Activated CD4-positive, alpha-beta T cell treated with anti-CD3 and anti-CD28 coated beads for 36 hours (primary cell): ENCODE measurements at regions of chr3 and their contacts with region 1.

Region 1: DNA sequence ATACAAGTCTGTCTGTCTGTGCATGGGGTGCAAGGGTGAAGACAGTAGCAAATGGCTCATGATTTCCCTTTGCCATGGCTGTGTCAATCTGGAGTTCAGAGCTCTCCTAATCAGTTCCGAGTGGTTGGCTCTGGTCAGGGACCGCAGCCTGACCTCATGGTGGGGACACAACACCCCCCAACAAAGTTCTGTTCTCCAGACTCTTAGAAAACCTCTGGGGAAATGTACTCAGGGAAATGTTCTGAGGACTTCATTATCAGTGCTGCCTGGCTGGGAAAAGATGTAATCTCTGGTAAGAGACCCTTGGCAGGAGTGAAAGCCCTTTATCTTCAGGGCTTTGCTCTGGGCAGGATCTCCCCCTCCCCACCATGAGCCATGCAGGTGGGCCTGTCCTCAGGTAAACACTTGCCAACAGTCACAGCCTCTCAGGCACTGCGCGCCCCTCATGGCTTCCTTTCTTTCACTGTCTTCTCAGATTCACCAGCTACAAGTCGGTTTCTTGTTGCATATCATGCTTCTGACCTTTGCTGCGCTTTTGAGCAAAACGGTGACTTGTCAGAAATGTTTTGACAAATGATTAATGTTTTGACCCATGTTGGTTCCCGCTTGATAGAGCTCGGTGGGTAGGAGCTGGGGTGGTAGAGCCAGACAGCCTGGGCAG is 95.5 kb downstream of the ST6GAL1 start:
- DNase-seq: peak; percentile 64
- ATAC-seq: peak; percentile 36
- H3K4me3 Mint-ChIP-seq: peak overlapping the region; percentile 85
- H3K27ac Mint-ChIP-seq: peak overlapping the region; percentile 97
- H3K4me1 Mint-ChIP-seq: peaks cover 49% of the 10 kb centered on the region
- H3K27me3 Mint-ChIP-seq: no peaks in the 10 kb centered on the region

Region 2: DNA sequence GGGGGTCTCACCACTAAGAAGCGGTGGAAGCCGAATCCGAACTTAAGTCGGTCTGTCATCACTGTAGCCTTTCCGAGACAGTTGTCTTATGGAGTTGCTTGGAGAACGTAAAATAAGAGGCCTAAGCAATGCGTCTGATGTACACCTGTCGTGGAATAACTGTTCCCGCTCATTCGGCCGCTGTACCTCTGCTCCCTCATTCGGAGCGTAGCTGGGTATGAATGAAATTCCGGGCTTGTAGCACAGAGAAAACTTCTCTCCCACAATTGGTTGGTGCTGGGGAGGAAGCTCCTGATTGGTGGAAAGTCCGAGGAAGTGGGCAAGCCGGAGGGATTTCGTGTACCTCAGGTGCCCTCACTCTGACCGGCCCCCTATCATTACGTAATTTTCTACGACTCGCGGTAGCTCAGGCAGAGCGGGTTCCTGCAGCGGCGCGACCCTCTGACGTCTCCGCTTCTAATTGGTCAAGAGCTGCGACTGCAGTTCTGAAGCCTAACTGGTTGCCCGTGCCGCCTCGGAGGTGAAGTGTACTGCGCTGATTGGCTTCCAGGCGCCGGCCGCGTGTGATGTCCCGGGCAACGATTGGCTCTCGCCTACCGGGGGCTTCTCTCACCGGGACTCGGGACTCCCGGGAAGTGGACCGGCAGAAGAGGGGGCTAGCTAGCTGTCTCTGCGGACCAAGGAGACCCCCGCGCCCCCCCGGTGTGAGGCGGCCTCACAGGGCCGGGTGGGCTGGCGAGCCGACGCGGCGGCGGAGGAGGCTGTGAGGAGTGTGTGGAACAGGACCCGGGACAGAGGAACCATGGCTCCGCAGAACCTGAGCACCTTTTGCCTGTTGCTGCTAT is 455.5 kb before region 1 on chr3 and contains the start of gene DNAJB11:
- CTCF ChIA-PET with region 1: interaction called, 3 read pairs
- POLR2A ChIA-PET with region 1: no interaction called
- intact Hi-C with region 1: loop called in 1 of 2 experiments (anchors 5 kb)
- DNase-seq: peak; percentile 100
- ATAC-seq: peak; percentile 92
- H3K4me3 Mint-ChIP-seq: peak within 1 kb of the TSS; percentile 93
- H3K27ac Mint-ChIP-seq: peak within 1 kb of the TSS; percentile 95
- H3K4me1 Mint-ChIP-seq: peaks cover 50% of the 10 kb centered on the region
- H3K27me3 Mint-ChIP-seq: no peaks in the 10 kb centered on the region
- total RNA-seq, gene DNAJB11: 30.9 to 36.6 TPM

Region 3: GRCh38 chr3:186849374-186849975 is 176.3 kb before region 1 on chr3:
- CTCF ChIA-PET with region 1: interaction called, 14 read pairs
- POLR2A ChIA-PET with region 1: interaction called, 5 read pairs
- intact Hi-C with region 1: loop called in 1 of 2 experiments (anchors 5 kb)
- DNase-seq: peak; percentile 32
- ATAC-seq: peak; percentile 90
- H3K4me3 Mint-ChIP-seq: no peak overlapping the region
- H3K27ac Mint-ChIP-seq: peak overlapping the region; percentile 52
- H3K4me1 Mint-ChIP-seq: peaks cover 18% of the 10 kb centered on the region
- H3K27me3 Mint-ChIP-seq: peaks cover 7% of the 10 kb centered on the region

Region 4: GRCh38 chr3:187006864-187007630 is 18.7 kb before region 1 on chr3:
- CTCF ChIA-PET with region 1: interaction called, 4 read pairs
- POLR2A ChIA-PET with region 1: interaction called, 5 read pairs
- intact Hi-C with region 1: loop called in 1 of 2 experiments (anchors 2 kb)
- DNase-seq: no peak
- ATAC-seq: peak; percentile 81
- H3K4me3 Mint-ChIP-seq: no peak overlapping the region
- H3K27ac Mint-ChIP-seq: peak overlapping the region; percentile 67
- H3K4me1 Mint-ChIP-seq: peaks cover 55% of the 10 kb centered on the region
- H3K27me3 Mint-ChIP-seq: no peaks in the 10 kb centered on the region

Region 5: DNA sequence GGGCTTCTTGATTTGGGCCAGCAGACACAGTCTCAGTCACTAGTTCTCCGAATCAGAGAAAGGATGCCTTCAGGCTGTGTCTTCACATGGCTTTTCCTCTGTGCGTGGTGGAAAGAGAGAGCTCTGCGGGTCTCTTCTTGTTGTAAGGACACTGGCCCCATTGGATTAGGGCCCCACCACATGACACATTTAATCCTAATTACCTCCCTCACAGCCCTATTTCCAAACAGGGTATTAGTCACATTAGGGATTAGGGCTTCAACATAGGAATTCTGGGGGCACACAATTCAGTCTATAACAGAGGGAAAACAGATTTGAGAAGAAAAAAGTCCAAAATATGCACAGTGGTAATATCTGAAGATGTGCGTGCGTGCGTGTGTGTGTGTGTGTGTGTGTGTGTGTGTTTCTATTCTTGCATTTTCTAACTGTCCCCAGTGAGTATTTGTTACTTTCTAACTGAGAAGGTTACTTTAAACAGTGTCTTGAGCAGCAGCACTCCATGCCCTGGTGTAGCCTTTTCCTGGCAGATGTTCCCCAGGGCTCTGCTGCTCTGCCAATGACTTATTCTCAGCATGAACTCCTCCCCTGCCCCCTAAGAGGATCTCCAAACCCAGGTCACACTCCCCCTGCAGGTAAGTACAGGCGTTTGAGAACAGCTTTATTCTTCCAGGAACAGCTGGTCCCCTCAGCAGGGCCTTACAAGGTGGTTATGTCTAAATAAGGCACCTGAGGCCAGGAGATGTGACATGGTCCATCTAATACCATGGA is 40.6 kb after region 1 on chr3:
- CTCF ChIA-PET with region 1: interaction called, 4 read pairs
- POLR2A ChIA-PET with region 1: no interaction called
- intact Hi-C with region 1: loop called (anchors 2 to 5 kb)
- DNase-seq: peak; percentile 65
- ATAC-seq: peak; percentile 74
- H3K4me3 Mint-ChIP-seq: no peak overlapping the region
- H3K27ac Mint-ChIP-seq: peak overlapping the region; percentile 61
- H3K4me1 Mint-ChIP-seq: peaks cover 61% of the 10 kb centered on the region
- H3K27me3 Mint-ChIP-seq: no peaks in the 10 kb centered on the region